Motor neuron (in vitro differentiated cells): ENCODE measurements at regions of chrX and their contacts with region 1.

Region 1: GRCh38 chrX:120514236-120514635 is 45.1 kb upstream of the LAMP2 start:
- ATAC-seq: peak in 1 of 8 experiments; percentile 30
- H3K4me3 ChIP-seq: no peak overlapping the region
- H3K27ac ChIP-seq: no peak overlapping the region
- H3K4me1 ChIP-seq: no peaks in the 10 kb centered on the region

Region 2: DNA sequence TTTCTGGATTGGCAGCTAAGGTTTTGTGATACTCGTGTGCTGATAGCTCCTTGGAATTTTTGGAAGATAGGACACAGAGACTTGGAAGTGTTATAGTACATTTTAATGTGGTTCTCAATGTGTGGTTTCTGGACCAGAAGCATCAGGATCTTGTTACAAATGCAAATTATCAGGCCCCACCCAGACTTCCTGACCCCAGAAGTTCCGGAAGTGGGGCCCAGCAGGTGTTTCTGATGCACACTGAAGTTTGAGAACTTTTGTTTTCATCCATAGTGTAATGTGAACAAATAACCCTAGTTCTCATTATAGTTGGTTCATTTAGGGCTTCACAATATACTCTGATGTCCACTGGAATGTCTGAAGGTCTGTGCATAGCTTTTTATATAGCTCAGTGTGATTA is 94.8 kb before region 1 on chrX:
- in situ Hi-C with region 1: no loop called
- ATAC-seq: no peak
- H3K4me3 ChIP-seq: no peak overlapping the region
- H3K27ac ChIP-seq: no peak overlapping the region
- H3K4me1 ChIP-seq: no peaks in the 10 kb centered on the region

Region 3: GRCh38 chrX:120664081-120664480 is 149.8 kb after region 1 on chrX:
- in situ Hi-C with region 1: loop called in 1 of 9 experiments (anchors 25 kb)
- ATAC-seq: no peak
- H3K4me3 ChIP-seq: no peak overlapping the region
- H3K27ac ChIP-seq: no peak overlapping the region
- H3K4me1 ChIP-seq: no peaks in the 10 kb centered on the region

Region 4: GRCh38 chrX:120769576-120770341 is 255.5 kb after region 1 on chrX:
- in situ Hi-C with region 1: loop called in 2 of 9 experiments (anchors 25 kb)
- ATAC-seq: peak in 4 of 8 experiments; percentile 21 to 80 (median 61)
- H3K4me3 ChIP-seq: no peak overlapping the region
- H3K27ac ChIP-seq: no peak overlapping the region
- H3K4me1 ChIP-seq: no peaks in the 10 kb centered on the region